ENCODE measurements at regions of chr14 and their contacts with region 1.

Region 1: DNA sequence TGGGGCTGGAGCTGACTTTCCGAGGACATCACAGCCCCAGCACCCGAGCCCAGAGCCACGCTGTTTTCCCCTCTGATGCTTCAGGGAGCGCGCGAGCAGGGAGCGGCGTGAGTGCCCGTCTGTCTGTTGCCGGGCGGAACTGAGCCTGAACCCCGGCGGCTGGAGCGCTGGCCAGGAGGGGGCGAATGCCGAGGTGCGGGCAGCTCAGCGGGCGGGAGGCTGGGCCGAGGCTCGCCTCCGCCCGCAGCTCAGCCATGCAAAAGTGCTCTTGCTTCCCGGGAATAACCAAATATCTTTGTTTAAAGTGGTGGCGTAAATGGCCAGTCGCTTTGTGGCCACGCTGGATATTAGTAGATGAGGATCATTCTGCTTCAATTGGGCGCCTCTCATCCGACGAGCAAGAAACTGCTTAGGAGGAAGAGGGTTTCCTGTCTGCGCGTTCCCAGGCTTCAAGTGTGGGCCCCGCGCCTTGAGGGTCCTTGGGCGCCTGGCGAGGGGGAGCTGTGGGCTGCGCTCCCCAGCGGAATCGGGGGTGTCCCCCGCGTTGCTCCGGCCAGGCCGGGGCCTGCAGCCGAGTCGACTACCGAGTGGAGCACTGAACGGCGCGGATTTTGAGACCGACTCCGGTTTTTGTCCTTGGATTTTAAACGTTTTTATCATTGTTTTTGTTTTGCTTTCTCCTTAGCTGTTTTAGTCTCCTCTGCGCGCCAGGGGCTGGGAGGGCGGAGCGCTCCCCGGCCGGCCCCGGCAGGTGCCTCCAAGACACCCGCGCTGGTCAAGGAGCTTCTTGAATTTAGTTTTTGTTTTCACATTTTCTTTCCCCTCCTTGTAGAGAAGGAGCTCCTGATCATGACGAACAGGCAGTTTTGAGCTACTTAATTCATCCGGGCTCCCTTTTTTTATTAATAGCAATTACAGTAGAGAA is 831 bp upstream of the NKX2-1 start:
- DNase-seq: peak in 1 of 2 experiments; percentile 52
- H3K4me3 ChIP-seq: peak overlapping the region; percentile 40; the same call in 1 of the 2 replicates
- H3K27ac ChIP-seq: no peak overlapping the region
- H3K4me1 ChIP-seq: no peaks in the 10 kb centered on the region
- H3K27me3 ChIP-seq: peaks cover 1% of the 10 kb centered on the region; the same call in 1 of the 2 replicates
- CTCF ChIP-seq: no peak

Region 2: DNA sequence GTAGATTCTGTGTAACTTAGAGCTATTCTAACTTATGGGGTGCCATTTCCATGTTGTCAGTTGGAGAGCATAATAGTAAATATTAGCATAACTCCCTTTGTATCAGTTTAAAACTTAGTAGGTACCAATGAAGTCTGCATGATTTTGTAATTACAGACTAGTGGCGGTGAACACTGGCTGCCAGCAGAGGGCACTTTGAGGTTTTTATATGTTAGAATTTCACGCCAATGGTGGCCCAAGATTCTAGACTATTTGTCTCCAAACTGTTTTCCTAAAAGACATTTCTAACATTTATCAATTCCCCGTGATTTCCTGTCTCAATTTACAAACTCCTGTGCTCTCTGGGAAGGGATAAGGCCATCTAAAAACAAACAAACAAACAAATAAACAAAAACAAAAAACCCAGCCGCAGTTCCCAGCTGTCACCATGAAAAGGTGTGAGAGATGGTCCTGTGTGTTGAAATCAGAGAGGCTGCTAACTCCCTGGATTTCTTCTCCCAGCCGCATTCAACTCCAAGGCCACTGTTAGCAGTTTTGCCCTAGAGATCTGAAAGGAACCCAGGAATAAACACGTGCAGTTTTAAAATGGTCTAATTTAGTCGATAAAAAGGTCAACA is 637.1 kb before region 1 on chr14:
- CTCF ChIA-PET with region 1: interaction called, 5 read pairs
- POLR2A ChIA-PET with region 1: no interaction called
- intact Hi-C with region 1: loop called (anchors 5 kb)
- DNase-seq: peak in 1 of 2 experiments; percentile 17
- H3K4me3 ChIP-seq: no peak overlapping the region
- H3K27ac ChIP-seq: no peak overlapping the region
- H3K4me1 ChIP-seq: peaks cover 7% of the 10 kb centered on the region
- H3K27me3 ChIP-seq: no peaks in the 10 kb centered on the region
- CTCF ChIP-seq: peak; percentile 64

Measured in PC-9 (cell line).